ENCODE measurements at regions of chr12 and their contacts with region 1.

Region 1: DNA sequence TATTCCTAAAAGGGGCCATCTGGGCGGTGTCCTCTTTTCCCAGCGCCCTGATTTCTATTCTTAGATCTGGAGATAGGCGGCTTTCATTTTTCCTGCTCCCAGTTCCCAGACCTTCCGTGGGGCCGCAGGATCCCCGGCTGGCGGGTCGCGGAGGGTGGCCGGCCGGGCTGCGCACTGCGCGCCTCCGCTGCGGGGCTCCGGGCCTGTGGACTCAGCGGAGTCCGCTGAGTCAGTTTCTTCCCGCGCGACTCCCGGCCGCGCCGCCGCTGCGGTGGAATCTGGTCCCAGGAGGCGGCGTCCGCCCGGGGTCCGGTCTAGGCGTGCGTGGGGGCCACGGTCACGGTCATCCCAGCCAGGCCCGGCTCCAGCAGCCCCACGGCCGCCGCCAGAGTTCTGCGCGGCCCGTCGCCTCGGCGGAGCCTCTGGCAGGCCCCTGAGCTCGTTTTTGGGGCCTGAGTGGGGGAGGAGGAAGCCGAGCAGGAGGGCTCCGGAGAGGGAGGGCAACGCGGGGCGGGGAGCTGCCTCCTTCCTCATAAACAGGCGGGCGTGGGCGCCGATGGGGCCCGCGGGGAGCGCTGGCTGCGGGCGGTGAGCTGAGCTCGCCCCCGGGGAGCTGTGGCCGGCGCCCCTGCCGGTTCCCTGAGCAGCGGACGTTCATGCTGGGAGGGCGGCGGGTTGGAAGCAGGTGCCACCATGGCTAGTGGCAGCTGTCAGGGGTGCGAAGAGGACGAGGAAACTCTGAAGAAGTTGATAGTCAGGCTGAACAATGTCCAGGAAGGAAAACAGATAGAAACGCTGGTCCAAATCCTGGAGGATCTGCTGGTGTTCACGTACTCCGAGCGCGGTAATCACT is at the start of gene LRRK2:
- DNase-seq: peak; percentile 86 to 93 (median 89)
- ATAC-seq: peak; percentile 65 to 96 (median 92)
- H3K4me3 ChIP-seq: peak within 1 kb of the TSS; percentile 52 to 82 (median 70)
- H3K27ac ChIP-seq: peak within 1 kb of the TSS; percentile 75 to 98 (median 94)
- H3K4me1 ChIP-seq: peaks cover 0 to 53% (median 9%) of the 10 kb centered on the region in 12 donors
- H3K27me3 ChIP-seq: no peaks in the 10 kb centered on the region
- CTCF ChIP-seq: peak in 2 of 12 donors; percentile 8 to 23
- POLR2A ChIP-seq: peak in 1 of 2 donors; percentile 52
- total RNA-seq, gene LRRK2: 4.4 to 12.3 (median 6.4) TPM

Region 2: GRCh38 chr12:39619660-39620433 is 604.8 kb before region 1 on chr12 and contains the start of gene ABCD2:
- intact Hi-C with region 1: loop called in 1 of 10 experiments (anchors 10 kb)
- DNase-seq: peak; percentile 68 to 78 (median 73)
- ATAC-seq: peak; percentile 82 to 95 (median 92)
- H3K4me3 ChIP-seq: peak within 1 kb of the TSS; percentile 18 to 74 (median 60)
- H3K27ac ChIP-seq: peak within 1 kb of the TSS; percentile 54 to 88 (median 81)
- H3K4me1 ChIP-seq: peaks cover 0 to 16% (median 0%) of the 10 kb centered on the region in 12 donors
- H3K27me3 ChIP-seq: no peaks in the 10 kb centered on the region
- CTCF ChIP-seq: peak in 3 of 12 donors; percentile 9 to 16 (median 16)
- POLR2A ChIP-seq: peak in 1 of 2 donors; percentile 27
- total RNA-seq, gene ABCD2: 3.4 to 8.6 (median 6.7) TPM

Region 3: GRCh38 chr12:40158592-40159111 is 66.0 kb before region 1 on chr12:
- intact Hi-C with region 1: loop called in 3 of 10 experiments (anchors 2 to 10 kb)
- DNase-seq: no peak
- ATAC-seq: peak; percentile 62 to 83 (median 66)
- H3K4me3 ChIP-seq: no peak overlapping the region
- H3K27ac ChIP-seq: peak overlapping the region in 1 of 12 donors; percentile 76
- H3K4me1 ChIP-seq: peaks cover 0 to 11% (median 0%) of the 10 kb centered on the region in 12 donors
- H3K27me3 ChIP-seq: no peaks in the 10 kb centered on the region
- CTCF ChIP-seq: no peak
- POLR2A ChIP-seq: no peak

Measured in heart left ventricle (tissue), 16 donors.